Pancreas (tissue), 10 donors: ENCODE measurements at regions of chr22 and their contacts with region 1.

Region 1: DNA sequence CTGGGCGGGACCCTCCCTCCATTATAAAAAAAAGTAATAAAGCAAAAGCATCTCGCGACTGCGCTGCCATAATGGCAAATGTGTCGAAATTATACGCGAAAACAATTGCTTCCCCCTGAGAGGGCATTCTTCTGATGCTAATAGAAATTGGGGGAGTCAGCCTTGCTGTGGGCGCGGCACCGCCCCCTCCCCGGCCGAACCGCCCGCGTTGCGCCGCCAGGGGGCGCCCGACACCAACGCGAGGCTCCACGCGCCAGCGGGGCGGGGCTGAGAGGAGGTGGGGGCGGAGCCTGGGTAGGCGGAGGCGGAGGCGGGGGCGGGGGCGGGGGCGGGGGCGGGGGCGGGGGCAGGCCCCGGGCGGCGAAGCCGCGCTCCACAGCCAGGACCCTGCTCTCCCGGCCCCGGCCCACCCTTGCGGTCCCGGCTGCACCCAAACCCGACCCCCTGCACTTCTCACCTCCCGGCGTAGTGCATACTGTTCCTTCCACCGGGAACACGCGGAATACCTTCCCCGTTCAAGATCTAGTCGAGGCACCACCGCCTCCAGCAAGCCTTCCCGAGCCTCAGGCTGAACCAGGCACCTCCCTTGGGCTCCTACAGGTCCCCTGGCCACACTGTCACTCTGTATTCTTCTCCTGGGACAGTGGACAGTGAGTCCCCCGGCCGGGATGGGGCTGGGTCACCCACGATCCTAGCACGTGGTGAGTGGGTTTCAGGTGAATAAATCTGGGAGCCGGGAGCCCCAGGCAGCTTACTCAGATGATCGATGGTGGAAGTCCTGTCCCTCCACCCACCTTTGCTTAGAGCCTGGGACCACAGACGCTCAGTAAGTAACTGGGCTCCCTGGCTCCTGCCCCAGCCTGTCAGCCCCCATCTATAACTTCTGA is 15.5 kb upstream of the UPK3A start:
- DNase-seq: peak; percentile 74 to 100 (median 90)
- ATAC-seq: peak; percentile 93 to 97 (median 96)
- H3K4me3 ChIP-seq: peak overlapping the region; percentile 16 to 58 (median 40)
- H3K27ac ChIP-seq: no peak overlapping the region
- H3K4me1 ChIP-seq: peaks cover 0 to 4% (median 4%) of the 10 kb centered on the region in 3 donors
- H3K27me3 ChIP-seq: no peaks in the 10 kb centered on the region
- CTCF ChIP-seq: peak; percentile 80 to 97 (median 94)

Region 2: GRCh38 chr22:45072322-45072903 is 196.8 kb before region 1 on chr22:
- intact Hi-C with region 1: no loop called
- DNase-seq: no peak
- ATAC-seq: no peak
- H3K4me3 ChIP-seq: no peak overlapping the region
- H3K27ac ChIP-seq: no peak overlapping the region
- H3K4me1 ChIP-seq: no peaks in the 10 kb centered on the region
- H3K27me3 ChIP-seq: no peaks in the 10 kb centered on the region
- CTCF ChIP-seq: no peak

Region 3: GRCh38 chr22:45329530-45329936 is 60.3 kb after region 1 on chr22:
- intact Hi-C with region 1: no loop called
- DNase-seq: peak in 1 of 6 donors; percentile 55
- ATAC-seq: peak in 3 of 4 donors; percentile 29 to 78 (median 70)
- H3K4me3 ChIP-seq: no peak overlapping the region
- H3K27ac ChIP-seq: no peak overlapping the region
- H3K4me1 ChIP-seq: no peaks in the 10 kb centered on the region
- H3K27me3 ChIP-seq: no peaks in the 10 kb centered on the region
- CTCF ChIP-seq: no peak

Region 4: DNA sequence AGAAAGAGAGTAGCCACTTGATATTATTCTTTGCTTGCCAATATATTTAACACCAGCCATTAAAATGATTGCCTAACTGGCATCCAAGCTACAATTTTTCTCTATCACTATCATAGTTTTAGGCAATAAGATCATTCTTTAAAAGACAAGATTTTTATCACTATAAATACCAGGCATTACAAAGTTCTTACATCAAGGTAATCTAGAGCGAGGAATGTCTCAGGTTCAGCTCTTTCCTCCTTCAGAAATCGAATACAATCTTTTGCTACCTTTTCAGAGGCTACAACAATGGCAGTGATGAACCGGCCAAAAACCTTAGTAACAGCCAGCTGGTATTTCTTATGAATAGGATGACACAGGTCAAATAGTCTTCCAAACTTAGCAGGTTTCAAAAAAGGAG is 120.3 kb after region 1 on chr22:
- intact Hi-C with region 1: no loop called
- DNase-seq: no peak
- ATAC-seq: no peak
- H3K4me3 ChIP-seq: no peak overlapping the region
- H3K27ac ChIP-seq: no peak overlapping the region
- H3K4me1 ChIP-seq: no peaks in the 10 kb centered on the region
- H3K27me3 ChIP-seq: no peaks in the 10 kb centered on the region
- CTCF ChIP-seq: no peak

Region 5: GRCh38 chr22:45425101-45425500 is 155.9 kb after region 1 on chr22:
- intact Hi-C with region 1: loop called (anchors 5 to 10 kb)
- DNase-seq: no peak
- ATAC-seq: no peak
- H3K4me3 ChIP-seq: no peak overlapping the region
- H3K27ac ChIP-seq: no peak overlapping the region
- H3K4me1 ChIP-seq: no peaks in the 10 kb centered on the region
- H3K27me3 ChIP-seq: no peaks in the 10 kb centered on the region
- CTCF ChIP-seq: no peak

Region 6: DNA sequence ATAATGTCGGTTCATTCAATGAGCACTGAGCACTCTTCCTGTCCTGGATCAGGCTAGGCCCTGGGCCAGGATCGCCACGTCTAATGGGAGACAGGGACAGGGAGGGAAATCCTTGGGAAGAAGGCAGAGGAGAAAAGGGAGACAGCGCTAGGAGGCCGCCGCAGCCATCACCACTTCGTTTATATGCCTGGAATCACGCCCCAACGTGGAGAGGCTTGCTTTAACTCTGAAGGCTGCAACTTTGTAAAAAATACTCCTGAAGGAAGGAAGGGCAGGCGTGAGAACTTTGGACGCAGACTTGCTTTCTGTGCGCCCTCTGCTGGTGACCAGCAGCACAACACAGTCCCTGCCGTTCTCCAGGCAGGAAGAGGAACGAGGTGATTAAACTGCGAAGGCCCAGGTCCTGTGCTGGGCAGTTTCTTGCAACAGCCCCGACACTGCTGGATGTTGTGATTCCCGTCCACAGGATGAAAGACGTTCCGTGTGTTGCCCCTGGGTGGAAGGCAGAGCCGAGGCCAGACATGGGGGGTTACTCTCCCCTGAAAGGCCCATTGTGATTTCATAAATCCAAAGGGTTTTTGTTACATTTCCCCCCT is 166.4 kb after region 1 on chr22:
- intact Hi-C with region 1: loop called in 2 of 3 experiments (anchors 5 to 10 kb)
- DNase-seq: peak; percentile 76 to 92 (median 87)
- ATAC-seq: peak; percentile 99 to 100 (median 99)
- H3K4me3 ChIP-seq: no peak overlapping the region
- H3K27ac ChIP-seq: peak overlapping the region in 1 of 4 donors; percentile 33
- H3K4me1 ChIP-seq: peaks cover 0 to 3% (median 0%) of the 10 kb centered on the region in 3 donors
- H3K27me3 ChIP-seq: no peaks in the 10 kb centered on the region
- CTCF ChIP-seq: peak; percentile 92 to 96 (median 94)

Region 7: GRCh38 chr22:45537734-45538181 is 268.6 kb after region 1 on chr22:
- intact Hi-C with region 1: no loop called
- DNase-seq: no peak
- ATAC-seq: peak in 3 of 4 donors; percentile 36 to 68 (median 38)
- H3K4me3 ChIP-seq: no peak overlapping the region
- H3K27ac ChIP-seq: no peak overlapping the region
- H3K4me1 ChIP-seq: no peaks in the 10 kb centered on the region
- H3K27me3 ChIP-seq: no peaks in the 10 kb centered on the region
- CTCF ChIP-seq: no peak

Region 8: DNA sequence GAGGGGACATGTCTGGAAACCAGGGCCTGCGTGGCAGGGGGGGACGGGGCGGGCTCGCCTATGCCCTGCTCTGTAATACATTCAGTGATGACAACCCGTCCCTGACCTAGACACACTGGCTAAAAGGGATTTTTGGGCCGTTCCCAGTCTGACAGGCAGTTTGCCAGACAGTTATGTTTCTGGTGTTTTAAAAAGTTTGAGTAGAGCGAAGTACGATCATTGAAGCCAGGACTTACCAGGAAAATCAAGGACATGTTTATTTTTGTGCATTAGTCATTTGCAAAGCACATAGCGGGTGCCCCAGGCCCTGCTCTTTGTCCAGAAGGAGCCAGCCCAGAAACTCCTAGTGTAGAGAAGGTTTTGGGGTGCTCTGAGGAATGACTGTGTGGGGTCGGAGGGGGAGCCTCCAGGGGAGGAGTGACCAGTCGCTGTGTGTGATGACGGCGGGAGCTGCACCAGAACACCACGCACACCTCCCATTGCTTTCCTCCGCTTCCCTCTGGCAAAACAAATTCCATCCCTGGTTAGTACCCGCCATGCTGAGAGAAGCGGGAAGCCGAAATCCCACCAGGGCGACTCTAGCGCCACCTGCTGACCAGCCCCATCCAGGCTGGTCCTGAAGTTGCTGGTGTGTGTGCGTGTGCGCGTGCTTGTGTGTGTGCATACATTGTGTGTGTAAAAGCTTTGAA is 284.3 kb after region 1 on chr22:
- intact Hi-C with region 1: loop called in 2 of 3 experiments (anchors 5 kb)
- DNase-seq: peak in 5 of 6 donors; percentile 41 to 89 (median 72)
- ATAC-seq: peak; percentile 78 to 80 (median 80)
- H3K4me3 ChIP-seq: no peak overlapping the region
- H3K27ac ChIP-seq: peak overlapping the region in 2 of 4 donors; percentile 22 to 33
- H3K4me1 ChIP-seq: peaks cover 0 to 10% (median 0%) of the 10 kb centered on the region in 3 donors
- H3K27me3 ChIP-seq: no peaks in the 10 kb centered on the region
- CTCF ChIP-seq: peak; percentile 64 to 77 (median 70)